SK-N-SH (cell line): ENCODE measurements at regions of chr9 and their contacts with region 1.

Region 1: GRCh38 chr9:95462249-95463147 is 54.3 kb downstream of the PTCH1 start:
- DNase-seq: peak; percentile 90
- H3K4me3 ChIP-seq: peak overlapping the region in 1 of 2 experiments; percentile 23; a peak in 3 of 4 replicates
- H3K27ac ChIP-seq: peak overlapping the region; percentile 22 to 94; a peak in 3 of 4 replicates
- H3K4me1 ChIP-seq: peaks cover 13 to 61% of the 10 kb centered on the region in 2 experiments; a peak in 3 of 4 replicates
- H3K27me3 ChIP-seq: no peaks in the 10 kb centered on the region
- CTCF ChIP-seq: no peak
- EP300 ChIP-seq: peak; percentile 79 to 93; a peak in 3 of 4 replicates
- RAD21 ChIP-seq: no peak; the same call in 1 of the 2 replicates

Region 2: GRCh38 chr9:95494416-95495371 is 32.2 kb after region 1 on chr9:
- CTCF ChIA-PET with region 1: interaction called, 4 read pairs
- POLR2A ChIA-PET with region 1: interaction called, 11 read pairs
- DNase-seq: peak; percentile 69
- H3K4me3 ChIP-seq: peak overlapping the region; percentile 48 to 57
- H3K27ac ChIP-seq: peak overlapping the region; percentile 10 to 96; a peak in 3 of 4 replicates
- H3K4me1 ChIP-seq: peaks cover 25 to 48% of the 10 kb centered on the region in 2 experiments; a peak in 3 of 4 replicates
- H3K27me3 ChIP-seq: no peaks in the 10 kb centered on the region
- CTCF ChIP-seq: no peak
- EP300 ChIP-seq: no peak
- RAD21 ChIP-seq: 0 out of 2 replicates have a peak, but pooled peaks have one; percentile 2

Region 3: DNA sequence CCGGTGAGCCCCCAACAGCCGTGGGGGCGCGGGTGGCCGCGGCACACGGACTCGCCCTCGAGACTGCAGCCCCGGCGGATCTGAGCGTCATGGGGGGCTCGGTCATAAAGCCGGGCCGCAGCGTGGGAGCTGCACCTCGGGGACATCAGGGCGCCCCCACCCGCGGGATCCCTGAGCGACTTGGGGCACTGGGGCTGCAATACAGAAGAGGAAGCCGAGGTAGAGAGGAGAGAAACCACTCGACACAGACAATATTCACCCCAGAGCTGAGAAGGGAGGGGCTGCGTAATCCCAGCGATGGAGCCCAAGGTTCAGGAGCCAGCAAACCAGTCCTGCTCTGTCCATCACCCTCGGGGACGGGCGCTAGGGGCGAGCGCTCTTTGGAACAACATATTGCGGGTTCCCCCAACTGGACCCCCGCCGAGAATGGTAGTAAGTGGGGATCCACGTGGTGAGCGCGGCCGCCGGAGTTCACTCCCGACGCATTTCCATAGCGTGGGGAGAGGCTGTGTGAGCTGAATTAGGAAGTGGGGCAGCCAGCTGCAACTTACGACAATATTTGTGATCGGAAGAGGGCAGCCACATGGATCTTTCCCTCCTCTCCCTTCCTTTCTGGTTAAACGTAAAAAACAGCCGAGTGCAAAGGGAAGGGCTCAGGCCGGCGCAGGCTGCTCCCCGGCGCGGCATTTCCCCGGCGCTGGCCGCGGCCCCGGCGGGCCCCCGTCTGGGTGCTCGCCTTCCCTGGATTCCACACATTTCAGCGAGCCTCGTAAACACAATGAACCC is 44.4 kb after region 1 on chr9:
- CTCF ChIA-PET with region 1: interaction called, 7 read pairs
- POLR2A ChIA-PET with region 1: interaction called, 13 read pairs
- DNase-seq: peak; percentile 64
- H3K4me3 ChIP-seq: peak overlapping the region; percentile 87 to 91
- H3K27ac ChIP-seq: peak overlapping the region; percentile 64 to 81
- H3K4me1 ChIP-seq: peaks cover 3 to 16% of the 10 kb centered on the region in 2 experiments; a peak in 3 of 4 replicates
- H3K27me3 ChIP-seq: no peaks in the 10 kb centered on the region
- CTCF ChIP-seq: no peak; the same call in 1 of the 2 replicates
- EP300 ChIP-seq: no peak
- RAD21 ChIP-seq: no peak; the same call in none of the 2 replicates

Region 4: DNA sequence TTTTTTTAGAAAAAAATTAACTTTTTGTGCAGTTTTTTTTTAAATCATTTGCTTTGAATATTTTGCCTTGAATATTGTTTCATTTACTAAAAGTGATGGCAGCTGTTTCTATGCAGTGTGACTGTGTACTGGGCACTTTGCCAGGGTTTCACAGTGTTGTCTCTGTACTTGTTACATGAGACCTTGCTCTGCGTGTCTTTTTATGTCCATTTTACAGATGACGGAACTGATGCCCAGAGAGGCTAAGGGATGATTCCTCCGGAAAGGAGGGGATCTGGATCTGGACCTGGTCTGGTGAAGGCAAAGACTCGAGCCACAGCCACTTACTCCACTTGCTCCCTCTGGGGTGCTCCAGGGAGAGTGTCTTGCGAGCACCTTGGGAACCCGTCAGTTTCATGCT is 179.1 kb after region 1 on chr9:
- CTCF ChIA-PET with region 1: no interaction called
- POLR2A ChIA-PET with region 1: no interaction called
- DNase-seq: no peak
- H3K4me3 ChIP-seq: no peak overlapping the region
- H3K27ac ChIP-seq: no peak overlapping the region
- H3K4me1 ChIP-seq: peaks cover 0 to 11% of the 10 kb centered on the region in 2 experiments; a peak in 1 of 4 replicates
- H3K27me3 ChIP-seq: no peaks in the 10 kb centered on the region
- CTCF ChIP-seq: no peak
- EP300 ChIP-seq: no peak
- RAD21 ChIP-seq: no peak